ENCODE measurements at regions of chr6 and their contacts with region 1.

Region 1: DNA sequence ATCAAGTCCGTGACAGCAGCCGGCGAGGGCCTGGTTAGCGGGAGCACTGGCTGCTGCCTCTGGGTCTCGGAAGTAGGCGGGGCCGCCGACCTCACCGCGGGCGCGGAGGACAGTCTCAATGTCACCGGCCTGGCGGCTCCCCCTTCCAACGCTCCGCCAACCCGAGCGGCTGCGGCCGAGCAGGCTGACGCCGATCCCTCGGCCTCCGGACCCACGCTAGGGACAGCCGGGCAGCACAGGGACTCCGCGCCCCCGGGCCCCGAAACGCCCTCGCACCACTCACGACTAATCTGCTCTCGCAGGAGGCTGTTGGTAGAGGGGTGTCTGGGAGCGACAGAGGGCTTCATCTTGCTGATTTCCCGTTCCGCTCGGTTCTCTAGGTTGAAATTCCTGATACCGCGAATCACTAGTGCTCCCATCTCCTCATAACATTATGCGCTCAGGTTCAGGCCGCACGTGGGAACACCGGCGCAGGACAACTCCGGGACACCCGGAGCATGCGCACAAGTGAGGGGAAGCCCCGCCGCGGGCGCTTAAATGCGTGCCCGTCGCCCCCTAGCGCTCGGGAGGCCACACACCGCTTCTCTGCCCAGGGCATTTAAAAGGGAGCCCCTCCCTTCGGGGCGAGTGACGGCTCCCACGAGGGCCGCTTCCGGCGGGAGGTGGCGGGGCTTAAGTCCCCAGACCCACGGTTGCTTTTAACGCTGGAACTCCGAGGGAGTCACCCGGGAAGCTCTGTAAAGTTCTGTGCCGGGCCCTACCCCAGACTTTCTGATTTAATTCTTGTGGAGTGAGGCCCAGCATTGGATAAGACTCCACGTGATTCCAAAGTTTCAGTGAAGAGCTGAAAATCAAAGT is at the start of gene NDUFAF4:
- DNase-seq: peak; percentile 89 to 96
- H3K4me3 ChIP-seq: peak within 1 kb of the TSS; percentile 83
- H3K27ac ChIP-seq: peak within 1 kb of the TSS; percentile 90
- H3K4me1 ChIP-seq: peaks cover 21% of the 10 kb centered on the region
- H3K27me3 ChIP-seq: no peaks in the 10 kb centered on the region
- CTCF ChIP-seq: peak; percentile 94
- total RNA-seq, gene NDUFAF4: 32.1 and 35.7 TPM in 2 replicates

Region 2: DNA sequence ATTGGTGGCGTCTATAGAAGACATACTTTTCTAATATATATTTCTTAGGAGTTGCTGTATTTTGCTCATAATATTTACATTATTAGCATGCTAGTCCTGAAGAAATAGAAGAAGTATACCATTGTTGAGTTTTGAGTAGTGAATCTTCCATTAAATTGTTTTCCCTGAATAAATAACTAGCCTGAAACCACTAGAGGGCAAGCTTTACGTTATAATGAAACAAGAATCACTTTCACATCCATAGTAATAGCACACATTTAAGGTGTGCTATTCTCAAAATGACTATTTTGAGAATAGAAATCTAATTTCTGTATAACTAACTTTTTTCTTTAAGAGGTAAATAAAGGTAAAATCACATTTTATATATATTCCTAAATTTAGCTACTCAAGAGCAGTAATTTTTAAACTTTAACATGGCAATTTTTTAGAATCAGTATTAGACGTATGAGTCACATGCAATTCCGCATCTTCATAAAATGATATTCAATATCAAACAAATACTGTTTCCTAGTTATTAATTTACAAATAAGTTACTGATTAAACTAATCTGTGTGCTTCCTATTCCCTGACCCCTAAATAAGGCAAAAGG is 1533.5 kb before region 1 on chr6:
- CTCF ChIA-PET with region 1: no interaction called
- POLR2A ChIA-PET with region 1: no interaction called
- intact Hi-C with region 1: loop called (anchors 2 kb)
- DNase-seq: no peak
- H3K4me3 ChIP-seq: no peak overlapping the region
- H3K27ac ChIP-seq: no peak overlapping the region
- H3K4me1 ChIP-seq: no peaks in the 10 kb centered on the region
- H3K27me3 ChIP-seq: no peaks in the 10 kb centered on the region
- CTCF ChIP-seq: peak; percentile 76

Region 3: GRCh38 chr6:96478695-96479094 is 418.9 kb before region 1 on chr6:
- CTCF ChIA-PET with region 1: no interaction called
- POLR2A ChIA-PET with region 1: no interaction called
- intact Hi-C with region 1: loop called (anchors 2 kb)
- DNase-seq: no peak
- H3K4me3 ChIP-seq: no peak overlapping the region
- H3K27ac ChIP-seq: no peak overlapping the region
- H3K4me1 ChIP-seq: no peaks in the 10 kb centered on the region
- H3K27me3 ChIP-seq: no peaks in the 10 kb centered on the region
- CTCF ChIP-seq: no peak

Region 4: GRCh38 chr6:96626759-96627364 is 270.8 kb before region 1 on chr6:
- CTCF ChIA-PET with region 1: interaction called, 4 read pairs
- POLR2A ChIA-PET with region 1: no interaction called
- intact Hi-C with region 1: loop called (anchors 2 kb)
- DNase-seq: no peak
- H3K4me3 ChIP-seq: no peak overlapping the region
- H3K27ac ChIP-seq: no peak overlapping the region
- H3K4me1 ChIP-seq: no peaks in the 10 kb centered on the region
- H3K27me3 ChIP-seq: no peaks in the 10 kb centered on the region
- CTCF ChIP-seq: peak; percentile 68

Region 5: DNA sequence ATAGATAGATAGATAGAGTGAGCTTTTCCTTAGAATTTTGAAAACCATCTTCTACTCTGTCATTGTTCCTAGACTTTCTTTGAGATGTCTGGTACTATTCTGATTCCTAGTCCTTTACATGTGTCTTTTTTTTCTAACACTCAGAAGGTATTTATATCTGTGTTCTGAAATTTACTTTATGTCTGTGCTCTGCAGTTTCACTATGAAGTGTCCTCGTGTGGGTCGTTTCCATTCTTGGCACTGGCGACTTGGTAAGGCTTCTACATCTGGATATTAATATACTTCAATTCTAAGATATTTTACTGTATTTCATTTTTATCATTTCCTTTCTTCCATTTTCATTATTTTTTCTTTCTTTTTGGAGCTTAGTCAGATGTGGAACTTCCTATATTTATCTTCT is 247.7 kb before region 1 on chr6:
- CTCF ChIA-PET with region 1: no interaction called
- POLR2A ChIA-PET with region 1: no interaction called
- intact Hi-C with region 1: no loop called
- DNase-seq: no peak
- H3K4me3 ChIP-seq: no peak overlapping the region
- H3K27ac ChIP-seq: no peak overlapping the region
- H3K4me1 ChIP-seq: no peaks in the 10 kb centered on the region
- H3K27me3 ChIP-seq: no peaks in the 10 kb centered on the region
- CTCF ChIP-seq: no peak

Region 6: DNA sequence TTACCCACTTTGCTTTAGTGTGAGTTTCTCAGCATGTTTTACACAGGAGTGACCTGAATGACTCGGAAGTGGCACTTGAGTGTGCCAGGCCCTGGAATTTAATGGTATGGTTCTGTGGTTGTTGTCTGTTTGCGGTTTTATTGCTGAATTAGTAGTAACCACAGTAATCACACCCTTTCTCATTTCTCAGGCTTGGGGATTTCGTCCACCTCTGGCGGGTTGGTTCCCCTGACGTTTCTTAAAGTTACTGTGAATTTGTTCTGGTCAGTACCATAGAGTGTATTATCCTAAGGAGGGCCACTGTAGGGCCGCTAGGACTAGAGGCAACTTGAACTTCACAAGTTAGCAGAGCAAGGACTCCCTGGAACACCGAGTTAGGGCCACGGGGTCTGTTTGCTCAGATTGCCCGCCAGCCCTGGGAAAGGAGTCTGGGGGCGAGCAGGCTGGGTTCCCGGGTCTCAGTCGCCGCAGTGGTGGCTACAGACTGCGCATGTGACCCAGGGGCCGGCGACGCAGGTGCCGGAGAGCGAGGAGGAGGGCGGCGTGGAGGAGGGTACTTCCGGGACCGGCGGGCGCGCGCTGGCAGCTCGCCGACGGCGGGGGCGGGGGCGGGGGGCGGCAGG is 26.4 kb after region 1 on chr6:
- CTCF ChIA-PET with region 1: interaction called, 5 read pairs
- POLR2A ChIA-PET with region 1: no interaction called
- intact Hi-C with region 1: loop called (anchors 1 kb)
- DNase-seq: no peak
- H3K4me3 ChIP-seq: peak overlapping the region; percentile 85
- H3K27ac ChIP-seq: peak overlapping the region; percentile 67
- H3K4me1 ChIP-seq: peaks cover 16% of the 10 kb centered on the region
- H3K27me3 ChIP-seq: no peaks in the 10 kb centered on the region
- CTCF ChIP-seq: no peak

Region 7: DNA sequence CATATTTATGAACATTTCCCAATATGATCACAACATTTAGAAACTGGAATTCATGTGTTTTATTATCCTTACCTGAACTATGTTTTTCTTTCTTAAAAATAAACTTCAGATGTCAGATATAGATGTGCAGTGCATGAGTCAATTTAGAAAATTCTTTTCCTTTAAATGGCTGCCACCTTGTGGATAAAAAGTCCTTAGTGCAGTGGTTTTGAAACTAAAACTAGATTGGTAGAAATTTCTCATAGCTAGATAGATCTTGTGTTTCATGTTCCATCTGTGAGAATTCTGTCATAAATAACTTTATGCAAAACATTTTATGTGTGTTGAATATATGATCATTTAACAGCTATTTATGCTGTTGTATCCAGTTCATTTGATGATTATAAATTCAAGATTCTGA is 161.9 kb after region 1 on chr6:
- CTCF ChIA-PET with region 1: interaction called, 3 read pairs
- POLR2A ChIA-PET with region 1: interaction called, 6 read pairs
- intact Hi-C with region 1: loop called (anchors 1 kb)
- DNase-seq: peak in 1 of 2 experiments; percentile 54
- H3K4me3 ChIP-seq: no peak overlapping the region
- H3K27ac ChIP-seq: no peak overlapping the region
- H3K4me1 ChIP-seq: no peaks in the 10 kb centered on the region
- H3K27me3 ChIP-seq: no peaks in the 10 kb centered on the region
- CTCF ChIP-seq: peak; percentile 74

Measured in PC-9 (cell line).